Psoas muscle (tissue), 8 donors: ENCODE measurements at regions of chr6 and their contacts with region 1.

Region 1: GRCh38 chr6:30742316-30743098 is at the start of gene FLOT1:
- DNase-seq: peak; percentile 99
- ATAC-seq: peak; percentile 90 to 92 (median 90)
- H3K4me3 ChIP-seq: peak within 1 kb of the TSS; percentile 92
- H3K27ac ChIP-seq: peak within 1 kb of the TSS; percentile 93
- H3K4me1 ChIP-seq: peaks cover 19% of the 10 kb centered on the region
- H3K27me3 ChIP-seq: no peaks in the 10 kb centered on the region
- CTCF ChIP-seq: no peak
- total RNA-seq, gene FLOT1: 113 to 182 (median 153) TPM

Region 2: DNA sequence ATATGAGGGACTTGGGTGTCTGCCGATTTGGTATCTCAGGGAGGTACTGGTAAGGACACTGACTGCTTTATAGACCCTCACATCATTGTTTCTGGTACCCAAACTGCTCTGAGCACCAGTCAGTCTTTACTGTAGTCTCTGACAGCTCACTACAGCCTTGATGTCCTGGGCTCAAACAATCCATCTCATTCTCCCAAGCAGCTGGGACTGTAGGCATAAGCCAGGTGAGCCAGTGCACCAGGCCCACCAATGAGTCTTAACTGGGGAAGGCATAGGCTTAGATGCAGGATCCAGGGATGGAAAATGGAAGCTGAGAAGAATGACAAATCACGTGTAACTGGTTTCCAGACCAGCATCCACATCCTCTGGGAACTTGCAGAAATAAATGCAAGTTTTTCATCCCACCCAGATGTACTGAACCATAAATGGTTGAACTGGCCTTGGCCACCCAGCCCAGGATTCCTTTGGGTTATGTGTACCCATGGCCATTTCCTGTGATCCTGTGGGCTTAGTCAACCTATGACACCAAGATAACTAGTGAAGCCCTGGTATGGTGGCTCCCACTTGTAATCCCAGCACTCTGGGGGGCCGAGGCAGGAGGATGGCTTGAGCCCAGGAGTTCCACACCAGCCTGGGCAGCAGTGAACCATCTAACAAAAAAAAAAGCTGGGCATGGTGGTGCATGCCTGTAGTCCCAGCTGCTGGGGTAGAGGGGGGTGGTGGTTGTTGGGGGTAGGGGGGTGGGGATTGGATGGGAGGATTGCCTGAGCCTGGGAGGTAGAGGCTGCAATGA is 16.6 kb before region 1 on chr6:
- intact Hi-C with region 1: loop called in 1 of 2 experiments (anchors 1 kb)
- DNase-seq: no peak
- ATAC-seq: no peak
- H3K4me3 ChIP-seq: no peak overlapping the region
- H3K27ac ChIP-seq: peak overlapping the region; percentile 46
- H3K4me1 ChIP-seq: peaks cover 16% of the 10 kb centered on the region
- H3K27me3 ChIP-seq: no peaks in the 10 kb centered on the region
- CTCF ChIP-seq: no peak

Region 3: GRCh38 chr6:30828027-30828960 is 85.8 kb after region 1 on chr6:
- intact Hi-C with region 1: loop called (anchors 5 kb)
- DNase-seq: peak; percentile 87 to 96
- ATAC-seq: peak; percentile 84 to 89 (median 89)
- H3K4me3 ChIP-seq: peak overlapping the region; percentile 37
- H3K27ac ChIP-seq: peak overlapping the region; percentile 95
- H3K4me1 ChIP-seq: peaks cover 34% of the 10 kb centered on the region
- H3K27me3 ChIP-seq: no peaks in the 10 kb centered on the region
- CTCF ChIP-seq: peak; percentile 96

Region 4: GRCh38 chr6:30883685-30884520 is 141.4 kb after region 1 on chr6 and contains the start of gene DDR1:
- intact Hi-C with region 1: loop called (anchors 2 to 5 kb)
- DNase-seq: peak; percentile 71 to 81
- ATAC-seq: peak in 2 of 4 donors; percentile 70 to 79
- H3K4me3 ChIP-seq: peak within 1 kb of the TSS; percentile 78
- H3K27ac ChIP-seq: peak within 1 kb of the TSS; percentile 93
- H3K4me1 ChIP-seq: peaks cover 41% of the 10 kb centered on the region
- H3K27me3 ChIP-seq: no peaks in the 10 kb centered on the region
- CTCF ChIP-seq: no peak
- total RNA-seq, gene DDR1: 26.3 to 129 (median 54.2) TPM

Region 5: DNA sequence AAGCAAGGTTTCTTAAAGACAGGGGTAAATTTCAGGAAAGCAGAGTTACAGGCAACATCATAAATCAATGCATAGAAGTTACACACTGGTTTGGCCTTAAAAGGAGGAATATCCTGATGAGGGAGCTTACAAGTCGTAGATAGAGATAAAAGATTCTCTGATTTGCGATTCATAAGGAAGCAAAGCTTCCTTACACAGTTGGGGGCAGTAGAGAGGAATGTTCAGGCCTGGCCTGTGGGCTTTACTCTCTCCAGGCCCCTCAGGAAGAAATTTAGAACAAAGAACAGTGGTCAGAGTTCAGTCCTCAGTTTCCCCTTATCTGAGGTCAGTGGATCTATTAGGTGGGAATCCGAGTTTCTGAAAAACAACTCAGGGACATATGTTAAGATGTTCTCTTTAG is 510.1 kb after region 1 on chr6:
- intact Hi-C with region 1: no loop called
- DNase-seq: no peak
- ATAC-seq: no peak
- H3K4me3 ChIP-seq: no peak overlapping the region
- H3K27ac ChIP-seq: no peak overlapping the region
- H3K4me1 ChIP-seq: no peaks in the 10 kb centered on the region
- H3K27me3 ChIP-seq: peaks cover 0 to 4% (median 4%) of the 10 kb centered on the region in 3 donors
- CTCF ChIP-seq: no peak